Activated CD4-positive, alpha-beta T cell treated with anti-CD3 and anti-CD28 coated beads, Interleukin-2, amount 10 ng/mL, durations not matched to agents 24 days and 14 days (primary cell): ENCODE measurements at regions of chr10 and their contacts with region 1.

Region 1: GRCh38 chr10:52488606-52489485 is 174.8 kb downstream of the DKK1 start:
- DNase-seq: no peak
- H3K4me3 Mint-ChIP-seq: no peak overlapping the region
- H3K27ac Mint-ChIP-seq: no peak overlapping the region
- H3K4me1 Mint-ChIP-seq: no peaks in the 10 kb centered on the region
- H3K27me3 Mint-ChIP-seq: no peaks in the 10 kb centered on the region

Region 2: GRCh38 chr10:52308251-52309031 is 180.4 kb before region 1 on chr10:
- intact Hi-C with region 1: loop called (anchors 2 kb)
- DNase-seq: peak; percentile 59
- H3K4me3 Mint-ChIP-seq: no peak overlapping the region
- H3K27ac Mint-ChIP-seq: no peak overlapping the region
- H3K4me1 Mint-ChIP-seq: peaks cover 4% of the 10 kb centered on the region
- H3K27me3 Mint-ChIP-seq: peaks cover 45% of the 10 kb centered on the region